Activated CD4-positive, alpha-beta T cell treated with anti-CD3 and anti-CD28 coated beads, Interleukin-2, amount 10 ng/mL, durations not matched to agents 7 days and 5 days (primary cell): ENCODE measurements at regions of chr22 and their contacts with region 1.

Region 1: DNA sequence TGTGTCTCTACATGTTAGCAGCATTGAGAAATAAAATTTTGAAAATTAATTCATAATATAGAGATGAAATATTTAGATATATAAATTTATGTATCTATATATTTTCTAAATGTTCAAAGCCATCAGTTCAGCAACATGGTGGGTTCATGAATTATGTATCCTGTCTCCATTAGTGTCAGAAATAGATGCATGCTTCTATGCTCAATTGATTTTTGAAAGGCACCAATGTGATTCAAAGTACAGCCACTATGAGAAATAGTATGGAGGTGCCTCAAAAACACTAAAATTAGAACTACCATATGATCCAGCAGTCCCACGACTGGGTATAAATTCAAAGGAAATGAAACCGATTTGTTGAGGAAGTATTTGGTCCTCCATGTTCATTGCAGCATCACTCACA is 128.6 kb upstream of the SYN3 start:
- DNase-seq: no peak
- H3K4me3 Mint-ChIP-seq: no peak overlapping the region
- H3K27ac Mint-ChIP-seq: no peak overlapping the region
- H3K4me1 Mint-ChIP-seq: no peaks in the 10 kb centered on the region
- H3K27me3 Mint-ChIP-seq: peaks cover 3% of the 10 kb centered on the region

Region 2: GRCh38 chr22:33247758-33248157 is 60.9 kb after region 1 on chr22:
- CTCF ChIA-PET with region 1: no interaction called
- POLR2A ChIA-PET with region 1: interaction called, 12 read pairs
- DNase-seq: no peak
- H3K4me3 Mint-ChIP-seq: no peak overlapping the region
- H3K27ac Mint-ChIP-seq: no peak overlapping the region
- H3K4me1 Mint-ChIP-seq: no peaks in the 10 kb centered on the region
- H3K27me3 Mint-ChIP-seq: no peaks in the 10 kb centered on the region